ENCODE measurements at regions of chr9 and their contacts with region 1.

Region 1: DNA sequence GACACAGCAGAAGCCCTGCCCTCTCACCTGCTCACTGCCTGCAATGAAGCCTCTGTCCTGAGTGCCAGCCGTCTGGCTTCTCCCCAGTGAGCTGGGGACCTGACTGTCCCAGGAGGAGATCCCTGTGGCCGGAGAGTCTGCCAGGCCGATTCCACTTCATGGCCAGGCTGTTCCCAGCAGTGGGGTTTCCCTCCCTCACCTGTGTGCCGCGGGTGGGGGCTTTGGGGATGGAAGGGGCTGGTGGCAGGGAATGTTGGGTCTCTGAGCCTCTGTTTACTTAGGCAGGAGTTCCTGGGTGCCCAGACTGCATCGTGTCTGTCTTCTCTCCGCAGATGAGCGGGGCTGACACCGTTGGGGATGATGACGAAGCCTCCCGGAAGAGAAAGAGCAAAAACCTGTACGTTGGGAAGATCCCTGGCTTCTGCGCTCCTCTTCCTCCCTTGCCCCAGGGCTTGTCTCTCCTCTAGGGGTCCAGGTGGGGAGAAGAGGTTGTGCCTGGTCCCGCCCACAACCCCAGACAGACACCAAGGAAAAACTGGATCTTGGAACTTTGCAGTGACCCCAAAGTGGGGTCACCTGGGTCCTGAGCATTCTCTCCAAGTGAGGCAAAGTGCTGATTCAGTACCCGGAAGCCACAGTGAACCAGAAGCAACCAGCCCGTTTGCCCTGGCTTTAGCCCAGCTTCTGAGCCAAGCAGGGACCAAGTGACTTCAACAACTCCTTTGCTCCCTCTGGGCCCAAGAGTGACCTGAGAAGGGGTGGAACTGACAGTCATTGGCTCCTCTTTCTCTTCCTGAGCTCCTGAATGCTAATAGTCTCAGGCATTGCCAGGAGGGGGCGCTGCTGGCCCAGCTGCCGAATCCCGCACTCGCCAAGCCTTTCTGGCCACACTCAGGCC is 127.7 kb downstream of the RGS3 start:
- DNase-seq: peak; percentile 73
- H3K4me3 ChIP-seq: no peak overlapping the region
- H3K27ac ChIP-seq: no peak overlapping the region
- H3K4me1 ChIP-seq: peaks cover 6% of the 10 kb centered on the region
- CTCF ChIP-seq: peak; percentile 98

Region 2: DNA sequence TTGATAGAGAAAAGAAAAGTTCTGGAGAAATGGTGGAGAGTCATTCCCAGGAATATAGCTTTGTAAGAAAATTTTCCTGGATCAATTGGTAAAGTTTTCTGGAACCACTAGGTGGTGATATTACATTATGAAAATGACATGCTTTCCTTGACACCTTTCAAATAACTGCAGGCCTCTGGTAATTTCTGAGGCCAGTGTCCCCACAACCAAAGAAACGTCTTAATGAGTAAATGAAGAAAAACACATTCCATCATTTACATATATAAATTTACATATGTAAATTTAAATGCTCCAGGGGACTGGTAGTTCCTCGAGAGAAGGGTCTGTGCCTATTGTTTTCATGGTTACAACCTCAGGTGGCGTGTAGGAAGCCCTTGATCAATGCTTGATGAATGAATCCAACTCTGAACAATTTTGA is 144.9 kb before region 1 on chr9:
- CTCF ChIA-PET with region 1: interaction called, 8 read pairs
- POLR2A ChIA-PET with region 1: interaction called, 3 read pairs
- intact Hi-C with region 1: loop called (anchors 2 kb)
- DNase-seq: peak; percentile 68
- H3K4me3 ChIP-seq: no peak overlapping the region
- H3K27ac ChIP-seq: no peak overlapping the region
- H3K4me1 ChIP-seq: peaks cover 5% of the 10 kb centered on the region
- CTCF ChIP-seq: peak; percentile 98